ENCODE measurements at regions of chr18 and their contacts with region 1.

Region 1: GRCh38 chr18:55038162-55038561 is 78.9 kb upstream of the CCDC68 start:
- DNase-seq: no peak
- ATAC-seq: no peak

Region 2: GRCh38 chr18:55073116-55073515 is 35.0 kb after region 1 on chr18:
- intact Hi-C with region 1: loop called (anchors 5 kb)
- DNase-seq: no peak
- ATAC-seq: no peak